Colonic mucosa (tissue), 4 donors: ENCODE measurements at regions of chr17 and their contacts with region 1.

Region 1: DNA sequence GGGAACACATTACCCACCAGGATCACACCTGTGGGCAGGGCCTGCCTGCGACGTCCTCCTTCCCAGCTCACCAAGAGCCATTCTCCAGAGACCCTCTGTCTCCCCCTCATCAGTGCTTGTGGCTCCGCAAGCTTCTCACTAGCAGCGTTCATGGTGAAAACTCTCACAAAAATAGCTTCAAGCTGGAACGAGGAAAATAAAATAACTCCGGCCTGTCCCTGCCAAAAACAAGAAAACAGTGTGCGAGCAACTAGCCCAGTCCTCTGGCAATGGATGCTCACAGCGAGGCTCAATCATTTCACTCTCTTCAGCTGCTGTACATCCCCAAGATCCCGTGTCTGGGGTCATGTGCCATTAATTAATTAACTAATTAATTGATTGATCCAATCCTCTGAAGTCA is 18.0 kb downstream of the SPACA3 start:
- DNase-seq: no peak
- H3K4me3 ChIP-seq: no peak overlapping the region
- H3K27ac ChIP-seq: no peak overlapping the region
- H3K4me1 ChIP-seq: no peaks in the 10 kb centered on the region
- H3K27me3 ChIP-seq: no peaks in the 10 kb centered on the region
- CTCF ChIP-seq: no peak

Region 2: DNA sequence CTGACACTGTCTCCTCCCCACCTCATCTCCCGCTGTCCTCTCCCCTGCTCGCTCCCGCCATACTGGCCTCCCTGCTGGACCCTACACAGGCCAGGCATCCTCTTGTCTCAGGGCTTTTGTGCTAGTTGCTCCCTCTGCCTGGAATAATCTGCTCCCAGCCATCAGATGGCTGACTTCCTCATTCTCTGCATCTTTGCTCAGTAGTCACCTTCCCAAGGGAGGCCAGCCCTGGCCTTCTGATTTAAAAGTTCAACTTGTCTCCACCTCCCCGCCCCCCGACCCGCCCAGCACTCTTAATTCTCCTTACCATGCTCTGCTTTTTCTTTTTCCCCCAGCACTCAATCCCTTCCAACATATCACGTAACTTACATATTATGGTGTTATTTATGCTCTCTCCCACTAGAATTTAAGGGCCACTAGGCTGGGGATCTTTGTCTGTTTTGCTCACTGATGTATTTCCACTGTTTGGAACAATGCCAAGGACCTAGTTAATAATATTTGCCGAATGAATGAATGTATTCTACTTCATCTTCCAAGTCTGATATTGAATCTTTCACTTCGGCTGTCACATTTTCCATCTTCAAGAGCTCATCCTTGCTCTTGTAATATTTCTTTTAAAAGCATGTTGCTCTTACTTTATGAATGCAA is 344.6 kb before region 1 on chr17:
- intact Hi-C with region 1: loop called (anchors 10 kb)
- DNase-seq: no peak
- H3K4me3 ChIP-seq: no peak overlapping the region
- H3K27ac ChIP-seq: no peak overlapping the region
- H3K4me1 ChIP-seq: no peaks in the 10 kb centered on the region
- H3K27me3 ChIP-seq: no peaks in the 10 kb centered on the region
- CTCF ChIP-seq: no peak